ENCODE measurements at regions of chr19 and their contacts with region 1.

Region 1: DNA sequence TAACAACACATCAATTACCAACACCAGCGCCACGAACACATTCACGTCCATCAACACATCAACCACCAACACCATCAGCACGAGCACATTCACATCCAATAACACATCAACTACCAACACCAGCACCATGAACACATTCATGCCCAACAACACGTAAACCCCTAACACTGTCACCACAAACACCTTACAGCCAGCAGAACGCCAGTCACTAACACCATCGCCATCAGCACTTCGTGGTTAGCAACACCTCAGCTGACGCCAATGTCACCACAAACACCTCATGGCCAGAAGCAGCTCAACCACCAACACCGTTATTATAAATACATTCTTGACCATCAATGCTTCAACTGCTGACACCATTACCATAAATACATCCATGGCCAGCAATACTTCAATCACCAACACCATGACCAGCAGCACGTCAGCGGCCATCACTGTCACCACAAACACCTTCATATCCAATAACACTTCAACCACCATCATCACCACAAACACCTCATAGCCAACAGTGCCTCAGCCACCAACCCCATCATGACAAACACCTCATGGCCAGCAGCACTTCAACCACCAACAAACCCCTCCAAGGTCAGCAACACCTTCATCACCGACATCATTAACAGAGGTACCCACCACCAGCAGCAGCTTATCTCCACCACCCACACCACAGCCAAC is 9.4 kb downstream of the FCER2 start:
- DNase-seq: peak; percentile 46 to 79
- ATAC-seq: peak; percentile 24 to 71 (median 67)
- H3K4me3 ChIP-seq: no peak overlapping the region
- H3K4me3 Mint-ChIP-seq: no peak overlapping the region
- H3K27ac ChIP-seq: peak overlapping the region; percentile 81
- H3K27ac Mint-ChIP-seq: no peak overlapping the region
- H3K4me1 ChIP-seq: peaks cover 49% of the 10 kb centered on the region
- H3K4me1 Mint-ChIP-seq: no peaks in the 10 kb centered on the region
- H3K27me3 ChIP-seq: no peaks in the 10 kb centered on the region
- H3K27me3 Mint-ChIP-seq: peaks cover 0 to 2% of the 10 kb centered on the region in 2 donors
- CTCF ChIP-seq: no peak

Region 2: GRCh38 chr19:7191946-7192691 is 500.4 kb before region 1 on chr19:
- intact Hi-C with region 1: loop called (anchors 5 kb)
- DNase-seq: peak; percentile 50 to 81
- ATAC-seq: peak; percentile 69 to 89 (median 73)
- H3K4me3 ChIP-seq: no peak overlapping the region
- H3K4me3 Mint-ChIP-seq: peak overlapping the region; percentile 80
- H3K27ac ChIP-seq: no peak overlapping the region
- H3K27ac Mint-ChIP-seq: peak overlapping the region; percentile 77 to 87
- H3K4me1 ChIP-seq: peaks cover 39% of the 10 kb centered on the region
- H3K4me1 Mint-ChIP-seq: peaks cover 36 to 44% of the 10 kb centered on the region in 2 donors
- H3K27me3 ChIP-seq: no peaks in the 10 kb centered on the region
- H3K27me3 Mint-ChIP-seq: no peaks in the 10 kb centered on the region
- CTCF ChIP-seq: peak; percentile 34

Region 3: DNA sequence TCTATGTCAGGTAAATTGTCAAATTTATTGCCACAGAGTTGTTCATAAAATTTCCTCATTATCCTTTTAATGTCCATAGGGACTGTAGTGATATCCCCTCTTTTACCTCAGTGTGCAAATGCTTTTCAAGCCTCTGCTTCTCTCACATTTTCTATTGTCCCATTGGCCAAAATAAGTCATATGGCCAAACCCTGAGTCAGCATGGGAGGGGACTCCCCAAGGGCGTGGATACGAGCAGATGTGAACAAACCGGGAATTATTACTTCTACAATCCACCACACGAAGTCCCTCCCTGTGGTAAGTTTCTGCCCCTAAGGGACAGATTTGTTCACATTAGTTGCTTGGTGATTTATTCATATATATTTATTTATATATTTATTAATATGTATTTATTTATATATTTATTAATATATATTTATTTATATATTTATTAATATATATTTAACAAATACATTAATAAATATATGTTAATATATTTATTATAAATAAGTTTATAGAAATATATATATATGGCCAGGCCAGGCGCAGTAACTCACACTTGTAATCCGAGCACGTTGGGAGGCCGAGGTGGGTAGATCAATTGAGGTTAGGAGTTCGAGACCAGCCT is 117.0 kb before region 1 on chr19:
- intact Hi-C with region 1: no loop called
- DNase-seq: no peak
- ATAC-seq: no peak
- H3K4me3 ChIP-seq: no peak overlapping the region
- H3K4me3 Mint-ChIP-seq: no peak overlapping the region
- H3K27ac ChIP-seq: no peak overlapping the region
- H3K27ac Mint-ChIP-seq: no peak overlapping the region
- H3K4me1 ChIP-seq: no peaks in the 10 kb centered on the region
- H3K4me1 Mint-ChIP-seq: no peaks in the 10 kb centered on the region
- H3K27me3 ChIP-seq: no peaks in the 10 kb centered on the region
- H3K27me3 Mint-ChIP-seq: peaks cover 3 to 11% of the 10 kb centered on the region in 2 donors
- CTCF ChIP-seq: no peak

Region 4: GRCh38 chr19:7806876-7807275 is 114.3 kb after region 1 on chr19:
- intact Hi-C with region 1: loop called (anchors 2 kb)
- DNase-seq: no peak
- ATAC-seq: no peak
- H3K4me3 ChIP-seq: no peak overlapping the region
- H3K4me3 Mint-ChIP-seq: no peak overlapping the region
- H3K27ac ChIP-seq: no peak overlapping the region
- H3K27ac Mint-ChIP-seq: no peak overlapping the region
- H3K4me1 ChIP-seq: peaks cover 19% of the 10 kb centered on the region
- H3K4me1 Mint-ChIP-seq: peaks cover 11 to 14% of the 10 kb centered on the region in 2 donors
- H3K27me3 ChIP-seq: no peaks in the 10 kb centered on the region
- H3K27me3 Mint-ChIP-seq: peaks cover 6 to 14% of the 10 kb centered on the region in 2 donors
- CTCF ChIP-seq: no peak

Measured in natural killer cell (primary cell).